Natural killer cell (primary cell): ENCODE measurements at regions of chr6 and their contacts with region 1.

Region 1: GRCh38 chr6:6547110-6547879 is 41.2 kb upstream of the LY86 start:
- DNase-seq: peak; percentile 72 to 92
- ATAC-seq: peak; percentile 93 to 95 (median 93)
- H3K4me3 ChIP-seq: peak overlapping the region; percentile 19
- H3K4me3 Mint-ChIP-seq: peak overlapping the region; percentile 70
- H3K27ac ChIP-seq: no peak overlapping the region
- H3K27ac Mint-ChIP-seq: no peak overlapping the region
- H3K4me1 ChIP-seq: peaks cover 17% of the 10 kb centered on the region
- H3K4me1 Mint-ChIP-seq: peaks cover 13 to 19% of the 10 kb centered on the region in 2 donors
- H3K27me3 ChIP-seq: peaks cover 25% of the 10 kb centered on the region
- H3K27me3 Mint-ChIP-seq: peaks cover 34 to 68% of the 10 kb centered on the region in 2 donors
- CTCF ChIP-seq: peak; percentile 85

Region 2: DNA sequence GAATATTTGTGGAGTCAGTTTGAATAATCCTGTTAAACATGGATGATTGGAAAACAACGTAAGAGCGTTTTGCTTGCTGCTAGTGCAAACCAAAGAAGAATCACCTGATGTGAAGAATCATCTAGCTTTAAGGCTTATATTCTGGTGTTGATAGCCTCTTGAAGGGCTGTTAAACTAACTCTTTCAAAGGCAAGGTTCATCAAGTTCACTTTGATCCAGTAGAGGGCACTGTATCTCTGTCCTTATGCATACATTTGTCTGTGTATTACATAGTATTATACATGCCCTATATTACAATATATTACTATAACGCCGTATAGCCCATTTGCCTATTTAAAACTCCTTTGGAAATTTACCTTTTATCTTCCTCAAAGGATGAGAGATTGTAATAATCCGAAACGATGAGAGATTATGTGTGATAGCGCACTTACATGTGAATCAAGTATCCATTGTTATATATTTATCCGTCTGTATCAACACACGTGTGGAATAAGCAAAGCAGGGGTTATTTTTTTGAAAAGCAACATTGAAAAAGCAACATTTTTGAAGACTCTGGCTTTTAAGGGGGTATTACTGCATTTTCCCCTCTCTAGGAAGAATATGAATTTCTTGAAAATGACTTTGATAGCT is 489.8 kb before region 1 on chr6:
- intact Hi-C with region 1: loop called (anchors 1 kb)
- DNase-seq: peak in 1 of 2 donors; percentile 64
- ATAC-seq: peak in 1 of 3 donors; percentile 60
- H3K4me3 ChIP-seq: no peak overlapping the region
- H3K4me3 Mint-ChIP-seq: no peak overlapping the region
- H3K27ac ChIP-seq: no peak overlapping the region
- H3K27ac Mint-ChIP-seq: no peak overlapping the region
- H3K4me1 ChIP-seq: no peaks in the 10 kb centered on the region
- H3K4me1 Mint-ChIP-seq: no peaks in the 10 kb centered on the region
- H3K27me3 ChIP-seq: peaks cover 2% of the 10 kb centered on the region
- H3K27me3 Mint-ChIP-seq: peaks cover 26 to 76% of the 10 kb centered on the region in 2 donors
- CTCF ChIP-seq: peak; percentile 48

Region 3: GRCh38 chr6:6635869-6636268 is 88.6 kb after region 1 on chr6:
- intact Hi-C with region 1: no loop called
- DNase-seq: no peak
- ATAC-seq: no peak
- H3K4me3 ChIP-seq: no peak overlapping the region
- H3K4me3 Mint-ChIP-seq: no peak overlapping the region
- H3K27ac ChIP-seq: no peak overlapping the region
- H3K27ac Mint-ChIP-seq: no peak overlapping the region
- H3K4me1 ChIP-seq: no peaks in the 10 kb centered on the region
- H3K4me1 Mint-ChIP-seq: peaks cover 0 to 13% of the 10 kb centered on the region in 2 donors
- H3K27me3 ChIP-seq: no peaks in the 10 kb centered on the region
- H3K27me3 Mint-ChIP-seq: no peaks in the 10 kb centered on the region
- CTCF ChIP-seq: no peak